IMR-90 (cell line): ENCODE measurements at regions of chr6 and their contacts with region 1.

Region 1: GRCh38 chr6:7300926-7301325 is 12.1 kb downstream of the SSR1 start:
- DNase-seq: no peak
- ATAC-seq: no peak
- H3K4me3 ChIP-seq: no peak overlapping the region
- H3K27ac ChIP-seq: no peak overlapping the region
- H3K4me1 ChIP-seq: no peaks in the 10 kb centered on the region
- H3K27me3 ChIP-seq: no peaks in the 10 kb centered on the region
- CTCF ChIP-seq: no peak
- POLR2A ChIP-seq: no peak
- RAD21 ChIP-seq: no peak

Region 2: GRCh38 chr6:6683969-6684833 is 616.7 kb before region 1 on chr6:
- CTCF ChIA-PET with region 1: no interaction called
- POLR2A ChIA-PET with region 1: interaction called, 11 read pairs
- dilution Hi-C with region 1: no loop called
- in situ Hi-C with region 1: no loop called
- intact Hi-C with region 1: no loop called
- DNase-seq: no peak
- ATAC-seq: no peak
- H3K4me3 ChIP-seq: no peak overlapping the region
- H3K27ac ChIP-seq: no peak overlapping the region
- H3K4me1 ChIP-seq: no peaks in the 10 kb centered on the region
- H3K27me3 ChIP-seq: peaks cover 10% of the 10 kb centered on the region
- CTCF ChIP-seq: no peak
- POLR2A ChIP-seq: no peak
- RAD21 ChIP-seq: no peak

Region 3: DNA sequence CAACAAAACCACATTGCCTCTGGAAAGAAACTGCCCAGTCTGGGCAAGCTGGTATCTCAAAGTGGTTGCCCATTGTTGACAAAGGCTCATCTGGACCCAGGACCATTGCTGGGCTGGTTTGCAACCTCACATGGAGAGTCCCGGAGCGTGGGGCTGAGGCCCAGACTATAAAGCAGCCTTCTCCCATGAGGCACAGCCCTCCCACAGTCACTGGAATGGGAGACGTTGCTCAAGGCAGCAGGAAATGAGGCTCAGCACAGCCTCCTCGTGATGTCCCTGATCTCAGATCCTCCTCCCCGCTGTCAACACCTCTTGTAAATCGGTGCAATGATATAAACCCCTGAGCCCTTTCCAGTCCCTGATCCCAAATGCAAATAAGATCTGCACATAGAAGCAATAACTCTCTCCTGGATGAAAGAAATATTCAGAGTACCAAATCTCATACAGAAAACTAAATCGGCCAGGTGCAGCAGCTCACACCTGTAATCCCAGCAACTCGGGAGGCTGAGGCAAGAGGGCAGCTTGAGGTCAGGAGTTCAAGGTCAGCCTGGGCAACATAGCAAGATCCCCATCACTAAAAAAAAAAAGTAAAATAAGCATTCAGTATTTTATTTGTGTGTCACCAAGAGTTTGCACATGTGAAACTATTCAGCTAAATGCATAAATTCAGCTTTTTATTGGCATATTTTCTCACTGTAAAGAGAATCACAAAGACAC is 296.2 kb before region 1 on chr6:
- CTCF ChIA-PET with region 1: no interaction called
- POLR2A ChIA-PET with region 1: no interaction called
- dilution Hi-C with region 1: no loop called
- in situ Hi-C with region 1: no loop called
- intact Hi-C with region 1: no loop called
- DNase-seq: no peak
- ATAC-seq: no peak
- H3K4me3 ChIP-seq: no peak overlapping the region
- H3K27ac ChIP-seq: no peak overlapping the region
- H3K4me1 ChIP-seq: no peaks in the 10 kb centered on the region
- H3K27me3 ChIP-seq: no peaks in the 10 kb centered on the region
- CTCF ChIP-seq: no peak
- POLR2A ChIP-seq: no peak
- RAD21 ChIP-seq: no peak